ENCODE measurements at regions of chr3 and their contacts with region 1.

Region 1: GRCh38 chr3:11379233-11379823 is 107.1 kb downstream of the ATG7 start:
- DNase-seq: peak; percentile 35
- ATAC-seq: peak; percentile 69
- H3K4me3 ChIP-seq: no peak overlapping the region
- H3K27ac ChIP-seq: peak overlapping the region; percentile 92
- H3K4me1 ChIP-seq: peaks cover 13% of the 10 kb centered on the region; the same call in 1 of the 2 replicates
- H3K27me3 ChIP-seq: no peaks in the 10 kb centered on the region
- CTCF ChIP-seq: peak; percentile 49; the same call in 1 of the 2 replicates

Region 2: GRCh38 chr3:11548721-11549131 is 169.4 kb after region 1 on chr3:
- CTCF ChIA-PET with region 1: no interaction called
- POLR2A ChIA-PET with region 1: no interaction called
- in situ Hi-C with region 1: no loop called
- intact Hi-C with region 1: loop called (anchors 5 kb)
- DNase-seq: peak; percentile 73
- ATAC-seq: peak; percentile 75
- H3K4me3 ChIP-seq: no peak overlapping the region
- H3K27ac ChIP-seq: peak overlapping the region; percentile 96
- H3K4me1 ChIP-seq: peaks cover 54% of the 10 kb centered on the region
- H3K27me3 ChIP-seq: no peaks in the 10 kb centered on the region
- CTCF ChIP-seq: no peak

Region 3: GRCh38 chr3:11651900-11652299 is 272.6 kb after region 1 on chr3:
- CTCF ChIA-PET with region 1: interaction called, 7 read pairs
- POLR2A ChIA-PET with region 1: no interaction called
- in situ Hi-C with region 1: no loop called
- intact Hi-C with region 1: loop called (anchors 2 kb)
- DNase-seq: no peak
- ATAC-seq: no peak
- H3K4me3 ChIP-seq: no peak overlapping the region
- H3K27ac ChIP-seq: no peak overlapping the region; the same call in 1 of the 2 replicates
- H3K4me1 ChIP-seq: peaks cover 12% of the 10 kb centered on the region
- H3K27me3 ChIP-seq: no peaks in the 10 kb centered on the region
- CTCF ChIP-seq: peak; percentile 25; the same call in 1 of the 2 replicates

Region 4: GRCh38 chr3:11803977-11804892 is 424.9 kb after region 1 on chr3:
- CTCF ChIA-PET with region 1: no interaction called
- POLR2A ChIA-PET with region 1: no interaction called
- in situ Hi-C with region 1: no loop called
- intact Hi-C with region 1: loop called (anchors 10 kb)
- DNase-seq: peak; percentile 18
- ATAC-seq: peak; percentile 86
- H3K4me3 ChIP-seq: no peak overlapping the region
- H3K27ac ChIP-seq: no peak overlapping the region
- H3K4me1 ChIP-seq: no peaks in the 10 kb centered on the region
- H3K27me3 ChIP-seq: no peaks in the 10 kb centered on the region
- CTCF ChIP-seq: peak; percentile 81